ENCODE measurements at regions of chr22 and their contacts with region 1.

Region 1: GRCh38 chr22:31977141-31977841 is 33.0 kb downstream of the YWHAH start:
- DNase-seq: peak; percentile 54 to 77 (median 68)
- ATAC-seq: peak; percentile 97
- H3K4me3 ChIP-seq: no peak overlapping the region
- H3K27ac ChIP-seq: no peak overlapping the region
- H3K4me1 ChIP-seq: peaks cover 0 to 2% of the 10 kb centered on the region in 2 experiments; a peak in 2 of 5 replicates
- H3K27me3 ChIP-seq: no peaks in the 10 kb centered on the region
- CTCF ChIP-seq: peak; percentile 74 to 83 (median 74)
- EP300 ChIP-seq: no peak
- POLR2A ChIP-seq: no peak
- RAD21 ChIP-seq: peak; percentile 67 to 88

Region 2: GRCh38 chr22:31715147-31715778 is 262.0 kb before region 1 on chr22:
- CTCF ChIA-PET with region 1: no interaction called
- POLR2A ChIA-PET with region 1: no interaction called
- in situ Hi-C with region 1: no loop called
- intact Hi-C with region 1: no loop called
- DNase-seq: no peak
- ATAC-seq: no peak
- H3K4me3 ChIP-seq: no peak overlapping the region
- H3K27ac ChIP-seq: no peak overlapping the region
- H3K4me1 ChIP-seq: no peaks in the 10 kb centered on the region
- H3K27me3 ChIP-seq: no peaks in the 10 kb centered on the region
- CTCF ChIP-seq: no peak
- EP300 ChIP-seq: no peak
- POLR2A ChIP-seq: no peak
- RAD21 ChIP-seq: no peak

Region 3: GRCh38 chr22:32080904-32081303 is 103.6 kb after region 1 on chr22:
- CTCF ChIA-PET with region 1: interaction called, 11 read pairs
- POLR2A ChIA-PET with region 1: no interaction called
- in situ Hi-C with region 1: loop called (anchors 5 kb)
- intact Hi-C with region 1: loop called (anchors 1 kb)
- DNase-seq: peak; percentile 24 to 47 (median 34)
- ATAC-seq: peak; percentile 72
- H3K4me3 ChIP-seq: no peak overlapping the region
- H3K27ac ChIP-seq: no peak overlapping the region
- H3K4me1 ChIP-seq: no peaks in the 10 kb centered on the region
- H3K27me3 ChIP-seq: peaks cover 0 to 6% of the 10 kb centered on the region in 2 experiments; a peak in 1 of 5 replicates
- CTCF ChIP-seq: peak; percentile 50 to 68 (median 56); a peak in 5 of 6 replicates
- EP300 ChIP-seq: no peak
- POLR2A ChIP-seq: no peak
- RAD21 ChIP-seq: peak; percentile 37 to 82

Region 4: DNA sequence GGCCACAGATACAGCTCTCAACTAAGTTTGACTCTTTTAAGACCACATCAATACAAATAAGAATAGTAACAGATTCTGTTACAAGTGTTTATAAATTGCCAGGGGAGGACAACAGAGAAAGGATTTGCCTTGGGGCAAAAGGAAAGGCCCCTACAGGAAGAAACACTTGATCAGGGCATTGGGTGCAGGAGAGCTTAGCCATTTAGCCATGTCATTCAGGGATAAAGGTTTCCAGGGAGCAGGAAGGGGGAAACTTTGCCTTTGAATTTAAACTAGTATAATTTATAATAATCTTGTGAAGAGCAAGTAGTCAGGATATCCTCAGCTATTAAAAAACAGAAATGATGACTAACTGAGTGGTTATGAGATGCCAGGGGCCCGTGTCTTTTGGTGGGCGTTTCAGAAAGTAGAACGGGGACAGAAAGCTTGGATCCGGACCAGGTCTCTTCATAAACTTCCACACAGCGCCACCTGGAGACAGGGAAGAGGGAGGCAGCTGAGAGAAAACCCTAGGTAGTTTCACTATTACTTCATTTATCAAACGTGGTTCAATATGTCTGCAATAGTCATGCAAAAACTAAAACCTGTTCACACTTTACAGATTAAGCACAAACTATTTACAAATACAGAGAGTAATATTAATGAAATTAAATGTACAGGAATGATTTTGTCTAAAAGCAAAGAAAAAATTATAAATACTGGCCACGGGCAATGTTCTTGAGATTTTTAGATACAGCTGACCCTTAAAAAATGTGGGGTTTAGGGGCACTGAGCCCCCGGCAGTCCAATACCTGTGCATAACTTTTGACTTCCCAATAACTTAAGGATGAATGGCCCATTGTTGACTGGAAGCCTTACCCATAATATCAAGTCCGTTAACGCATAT is 288.8 kb after region 1 on chr22:
- CTCF ChIA-PET with region 1: interaction called, 9 read pairs
- POLR2A ChIA-PET with region 1: no interaction called
- in situ Hi-C with region 1: loop called (anchors 5 kb)
- intact Hi-C with region 1: loop called (anchors 5 kb)
- DNase-seq: peak; percentile 43 to 69 (median 49)
- ATAC-seq: peak; percentile 82
- H3K4me3 ChIP-seq: no peak overlapping the region
- H3K27ac ChIP-seq: no peak overlapping the region
- H3K4me1 ChIP-seq: no peaks in the 10 kb centered on the region; a peak in 1 of 5 replicates
- H3K27me3 ChIP-seq: peaks cover 9 to 21% of the 10 kb centered on the region in 2 experiments; a peak in 4 of 5 replicates
- CTCF ChIP-seq: peak; percentile 69 to 75 (median 72)
- EP300 ChIP-seq: no peak
- POLR2A ChIP-seq: no peak
- RAD21 ChIP-seq: peak; percentile 20 to 57; a peak in 2 of 4 replicates